Prostate gland (tissue), 2 donors: ENCODE measurements at regions of chr4 and their contacts with region 1.

Region 1: DNA sequence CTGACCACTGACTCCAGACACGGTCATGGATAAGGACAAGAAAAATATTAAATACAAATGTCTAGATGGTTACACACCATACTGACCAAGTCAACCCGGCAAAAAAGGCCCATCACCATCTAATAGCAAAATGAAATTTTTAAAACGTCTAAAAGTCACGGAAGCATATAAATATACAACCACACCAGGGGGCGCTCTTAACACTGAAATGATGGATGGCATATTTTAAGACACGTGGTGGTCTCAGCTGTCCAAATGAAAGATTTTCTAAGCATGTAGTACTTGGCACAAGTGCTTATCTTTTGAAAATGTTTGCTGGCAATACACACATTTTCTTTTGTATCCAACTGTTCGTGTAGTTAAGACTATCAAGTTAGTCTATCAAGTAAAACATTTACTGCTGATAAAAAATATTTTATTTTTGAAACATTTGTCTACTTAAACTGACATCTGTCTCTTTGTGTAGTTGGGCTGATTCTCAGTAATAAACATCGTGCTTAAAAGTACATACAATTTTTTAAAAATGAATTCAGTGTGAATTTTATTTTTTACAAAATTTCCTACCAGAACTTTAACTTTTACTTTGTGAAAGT is 64.6 kb downstream of the COX7B2 start:
- DNase-seq: peak; percentile 5
- H3K4me3 ChIP-seq: no peak overlapping the region
- H3K27ac ChIP-seq: no peak overlapping the region
- H3K4me1 ChIP-seq: no peaks in the 10 kb centered on the region
- H3K27me3 ChIP-seq: no peaks in the 10 kb centered on the region
- CTCF ChIP-seq: peak in 3 of 4 experiments; percentile 15 to 43 (median 28)
- POLR2A ChIP-seq: no peak

Region 2: DNA sequence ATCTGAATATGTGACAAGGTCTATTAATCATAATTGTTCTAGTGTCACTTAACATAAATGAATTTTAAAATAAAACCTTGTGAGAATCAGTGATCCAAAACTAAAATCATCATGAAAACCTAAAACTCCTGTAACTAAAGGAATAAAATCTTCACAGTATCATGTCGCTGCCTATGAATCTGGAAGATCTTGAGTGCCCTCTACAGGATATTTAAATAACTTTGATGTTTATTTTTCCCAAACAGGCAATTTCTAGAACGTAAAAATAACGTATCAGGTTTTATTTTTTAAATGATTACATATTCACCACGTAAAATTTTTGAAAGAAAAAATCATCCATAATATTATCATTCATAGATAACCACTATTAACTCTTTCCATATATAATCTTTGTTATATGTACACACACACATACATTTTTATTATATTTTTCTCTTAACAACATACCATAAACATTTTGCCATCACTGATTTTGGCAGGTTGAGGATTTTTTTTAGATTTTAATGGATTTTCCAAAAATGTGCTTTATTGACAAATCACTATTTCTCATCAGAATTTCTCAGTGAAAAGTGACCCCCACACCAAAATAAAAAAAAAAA is 539.5 kb after region 1 on chr4:
- intact Hi-C with region 1: loop called (anchors 10 kb)
- DNase-seq: no peak
- H3K4me3 ChIP-seq: no peak overlapping the region
- H3K27ac ChIP-seq: no peak overlapping the region
- H3K4me1 ChIP-seq: no peaks in the 10 kb centered on the region
- H3K27me3 ChIP-seq: no peaks in the 10 kb centered on the region
- CTCF ChIP-seq: peak in 2 of 4 experiments; percentile 39 to 42
- POLR2A ChIP-seq: no peak